Heart left ventricle (tissue), 16 donors: ENCODE measurements at regions of chr9 and their contacts with region 1.

Region 1: GRCh38 chr9:109119439-109120203 is at the start of gene TMEM245:
- DNase-seq: peak; percentile 96 to 98 (median 98)
- ATAC-seq: peak; percentile 96 to 99 (median 98)
- H3K4me3 ChIP-seq: peak within 1 kb of the TSS; percentile 84 to 99 (median 94)
- H3K27ac ChIP-seq: peak within 1 kb of the TSS; percentile 82 to 98 (median 92)
- H3K4me1 ChIP-seq: peaks cover 3 to 46% (median 34%) of the 10 kb centered on the region in 12 donors
- H3K27me3 ChIP-seq: no peaks in the 10 kb centered on the region
- CTCF ChIP-seq: peak in 4 of 12 donors; percentile 4 to 26 (median 13)
- POLR2A ChIP-seq: peak; percentile 79 to 98
- total RNA-seq, gene TMEM245: 84.4 to 174 (median 103) TPM

Region 2: GRCh38 chr9:109098171-109098959 is 21.3 kb before region 1 on chr9:
- intact Hi-C with region 1: loop called in 1 of 10 experiments (anchors 2 kb)
- DNase-seq: no peak
- ATAC-seq: peak; percentile 62 to 79 (median 72)
- H3K4me3 ChIP-seq: peak overlapping the region in 2 of 12 donors; percentile 1 to 3
- H3K27ac ChIP-seq: peak overlapping the region; percentile 37 to 88 (median 78)
- H3K4me1 ChIP-seq: peaks cover 13 to 92% (median 67%) of the 10 kb centered on the region in 12 donors
- H3K27me3 ChIP-seq: no peaks in the 10 kb centered on the region
- CTCF ChIP-seq: peak in 8 of 12 donors; percentile 11 to 49 (median 30)
- POLR2A ChIP-seq: no peak

Region 3: DNA sequence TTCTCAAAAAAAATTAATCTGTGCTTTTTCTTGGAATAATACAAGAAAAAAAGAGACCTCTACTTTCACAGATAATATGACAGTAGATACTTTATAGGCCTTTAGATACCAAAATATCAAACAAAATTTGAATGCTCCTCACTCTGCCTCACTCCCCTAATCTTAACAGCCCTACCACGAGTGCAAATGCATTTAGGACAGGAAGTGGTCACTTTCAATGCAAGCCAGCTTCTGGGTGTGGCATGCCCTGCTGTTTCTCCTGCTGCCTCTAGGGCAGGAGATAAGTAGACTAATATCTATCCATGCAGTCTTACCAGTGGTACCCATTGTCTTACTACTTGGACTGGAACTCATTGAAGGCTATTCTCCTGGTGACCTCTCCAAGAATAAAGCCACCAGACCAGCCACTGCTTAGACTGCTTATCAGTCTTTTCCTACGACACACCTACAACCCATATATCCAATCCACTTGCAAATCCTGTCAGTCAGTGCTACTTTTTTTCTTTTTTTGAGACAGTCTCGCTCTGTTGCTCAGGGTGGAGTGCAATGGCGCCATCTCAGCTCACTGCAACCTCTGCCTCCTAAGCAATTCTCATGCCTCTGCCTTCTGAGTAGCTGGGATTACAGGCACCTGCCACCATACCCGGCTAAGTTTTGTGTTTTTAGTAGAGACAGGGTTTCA is 24.4 kb after region 1 on chr9:
- intact Hi-C with region 1: no loop called
- DNase-seq: no peak
- ATAC-seq: no peak
- H3K4me3 ChIP-seq: no peak overlapping the region
- H3K27ac ChIP-seq: no peak overlapping the region
- H3K4me1 ChIP-seq: no peaks in the 10 kb centered on the region
- H3K27me3 ChIP-seq: no peaks in the 10 kb centered on the region
- CTCF ChIP-seq: peak in 2 of 12 donors; percentile 5 to 9
- POLR2A ChIP-seq: no peak

Region 4: GRCh38 chr9:109224751-109225150 is 105.1 kb after region 1 on chr9:
- intact Hi-C with region 1: no loop called
- DNase-seq: no peak
- ATAC-seq: no peak
- H3K4me3 ChIP-seq: no peak overlapping the region
- H3K27ac ChIP-seq: no peak overlapping the region
- H3K4me1 ChIP-seq: no peaks in the 10 kb centered on the region
- H3K27me3 ChIP-seq: no peaks in the 10 kb centered on the region
- CTCF ChIP-seq: no peak
- POLR2A ChIP-seq: no peak